GM13976 (cell line): ENCODE measurements at regions of chr4 and their contacts with region 1.

Region 1: DNA sequence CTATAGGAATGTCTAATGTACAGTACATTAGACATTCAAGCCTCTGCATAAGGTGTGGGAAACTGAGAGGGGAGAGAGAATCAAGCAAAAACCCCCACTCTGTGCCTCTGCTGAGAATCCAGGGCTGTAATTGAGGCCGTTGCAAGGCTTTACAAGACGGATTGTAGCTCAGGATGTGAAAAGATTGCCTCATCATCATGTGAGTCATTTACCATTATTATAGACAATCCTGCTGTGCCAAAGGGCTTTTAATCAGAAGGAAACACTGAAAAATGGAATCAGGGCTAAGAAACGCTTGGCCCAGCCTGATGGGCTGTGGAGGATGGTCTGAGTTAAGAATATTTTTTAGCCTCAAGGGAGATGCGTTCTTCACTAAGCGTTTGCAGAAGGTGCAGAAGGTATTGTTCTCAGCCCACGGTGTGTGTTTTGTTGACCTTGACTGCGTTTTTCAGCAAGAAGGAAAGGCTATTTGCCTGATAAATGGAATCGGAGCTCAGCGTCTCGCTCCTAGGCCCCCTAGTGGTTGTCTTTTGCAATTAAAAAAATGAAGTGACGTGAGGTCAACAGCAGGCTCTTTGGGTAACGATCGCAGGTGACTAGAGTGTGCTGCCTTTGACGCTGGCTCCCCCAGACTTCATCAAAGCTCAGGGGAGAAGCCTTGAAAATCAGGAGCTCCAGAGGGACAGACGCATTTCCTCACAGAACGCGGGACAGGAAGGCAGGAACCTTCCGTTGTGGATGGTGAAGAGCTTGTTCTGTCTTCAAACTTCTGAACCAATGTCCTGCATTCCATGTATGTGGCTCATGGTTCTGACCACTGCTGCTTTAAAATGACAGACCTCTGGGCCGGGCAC is 18.1 kb upstream of the CHRNA9 start:
- DNase-seq: peak; percentile 69
- CTCF ChIP-seq: peak; percentile 69

Region 2: DNA sequence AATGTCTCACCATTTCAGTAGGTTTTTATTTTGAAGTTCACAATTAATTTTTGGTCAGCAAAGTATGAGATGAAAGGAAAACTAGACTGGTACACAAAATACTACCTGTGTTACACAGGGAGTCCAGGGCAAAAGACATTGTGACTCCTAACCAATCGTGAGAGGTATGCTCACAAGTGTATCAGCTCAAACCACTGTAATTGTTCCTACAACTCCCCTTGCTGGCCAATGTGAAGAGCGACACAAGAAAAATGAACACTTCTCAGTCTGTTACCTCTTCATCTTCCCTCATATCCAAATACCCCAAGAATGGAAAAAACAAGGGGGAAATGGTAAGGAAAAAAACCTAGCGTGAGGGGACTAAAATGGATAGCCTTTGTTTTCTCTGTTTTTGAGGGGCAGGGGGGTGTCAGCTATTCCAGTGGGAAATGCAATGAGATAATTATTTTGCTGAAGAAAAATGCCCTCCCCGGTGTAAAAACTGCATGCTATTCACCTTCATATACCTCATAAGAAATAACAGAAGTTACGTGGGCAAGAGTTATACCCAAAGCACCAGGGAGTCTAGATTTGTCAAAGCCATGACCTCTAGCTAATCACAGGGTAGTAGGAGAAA is 402.1 kb after region 1 on chr4:
- in situ Hi-C with region 1: loop called (anchors 10 kb)
- DNase-seq: peak; percentile 58
- CTCF ChIP-seq: peak; percentile 38